Natural killer cell (primary cell): ENCODE measurements at regions of chr5 and their contacts with region 1.

Region 1: GRCh38 chr5:175700991-175701390 is 43.1 kb downstream of the HRH2 start:
- DNase-seq: peak in 1 of 2 donors; percentile 41
- ATAC-seq: peak in 1 of 3 donors; percentile 7
- H3K4me3 ChIP-seq: no peak overlapping the region
- H3K4me3 Mint-ChIP-seq: no peak overlapping the region
- H3K27ac ChIP-seq: no peak overlapping the region
- H3K27ac Mint-ChIP-seq: no peak overlapping the region
- H3K4me1 ChIP-seq: peaks cover 10% of the 10 kb centered on the region
- H3K4me1 Mint-ChIP-seq: peaks cover 0 to 7% of the 10 kb centered on the region in 2 donors
- H3K27me3 ChIP-seq: no peaks in the 10 kb centered on the region
- H3K27me3 Mint-ChIP-seq: peaks cover 8 to 30% of the 10 kb centered on the region in 2 donors
- CTCF ChIP-seq: no peak

Region 2: GRCh38 chr5:174951146-174951780 is 749.7 kb before region 1 on chr5:
- intact Hi-C with region 1: loop called (anchors 5 kb)
- DNase-seq: peak in 1 of 2 donors; percentile 77
- ATAC-seq: peak in 2 of 3 donors; percentile 55 to 71
- H3K4me3 ChIP-seq: no peak overlapping the region
- H3K4me3 Mint-ChIP-seq: no peak overlapping the region
- H3K27ac ChIP-seq: no peak overlapping the region
- H3K27ac Mint-ChIP-seq: no peak overlapping the region
- H3K4me1 ChIP-seq: no peaks in the 10 kb centered on the region
- H3K4me1 Mint-ChIP-seq: no peaks in the 10 kb centered on the region
- H3K27me3 ChIP-seq: no peaks in the 10 kb centered on the region
- H3K27me3 Mint-ChIP-seq: no peaks in the 10 kb centered on the region
- CTCF ChIP-seq: peak; percentile 51

Region 3: GRCh38 chr5:175534070-175534932 is 166.7 kb before region 1 on chr5:
- intact Hi-C with region 1: loop called (anchors 1 kb)
- DNase-seq: peak; percentile 65 to 92
- ATAC-seq: peak; percentile 95 to 100 (median 99)
- H3K4me3 ChIP-seq: no peak overlapping the region
- H3K4me3 Mint-ChIP-seq: peak overlapping the region; percentile 35
- H3K27ac ChIP-seq: no peak overlapping the region
- H3K27ac Mint-ChIP-seq: peak overlapping the region in 1 of 2 donors; percentile 36
- H3K4me1 ChIP-seq: peaks cover 5% of the 10 kb centered on the region
- H3K4me1 Mint-ChIP-seq: peaks cover 0 to 12% of the 10 kb centered on the region in 2 donors
- H3K27me3 ChIP-seq: no peaks in the 10 kb centered on the region
- H3K27me3 Mint-ChIP-seq: peaks cover 0 to 2% of the 10 kb centered on the region in 2 donors
- CTCF ChIP-seq: peak; percentile 99

Region 4: GRCh38 chr5:175718401-175719108 is 17.6 kb after region 1 on chr5:
- intact Hi-C with region 1: no loop called
- DNase-seq: peak in 1 of 2 donors; percentile 69
- ATAC-seq: no peak
- H3K4me3 ChIP-seq: no peak overlapping the region
- H3K4me3 Mint-ChIP-seq: no peak overlapping the region
- H3K27ac ChIP-seq: no peak overlapping the region
- H3K27ac Mint-ChIP-seq: no peak overlapping the region
- H3K4me1 ChIP-seq: no peaks in the 10 kb centered on the region
- H3K4me1 Mint-ChIP-seq: no peaks in the 10 kb centered on the region
- H3K27me3 ChIP-seq: no peaks in the 10 kb centered on the region
- H3K27me3 Mint-ChIP-seq: peaks cover 5 to 8% of the 10 kb centered on the region in 2 donors
- CTCF ChIP-seq: peak; percentile 25

Region 5: GRCh38 chr5:175746851-175747250 is 45.9 kb after region 1 on chr5:
- intact Hi-C with region 1: no loop called
- DNase-seq: no peak
- ATAC-seq: no peak
- H3K4me3 ChIP-seq: no peak overlapping the region
- H3K4me3 Mint-ChIP-seq: no peak overlapping the region
- H3K27ac ChIP-seq: no peak overlapping the region
- H3K27ac Mint-ChIP-seq: no peak overlapping the region
- H3K4me1 ChIP-seq: no peaks in the 10 kb centered on the region
- H3K4me1 Mint-ChIP-seq: peaks cover 0 to 4% of the 10 kb centered on the region in 2 donors
- H3K27me3 ChIP-seq: no peaks in the 10 kb centered on the region
- H3K27me3 Mint-ChIP-seq: peaks cover 20 to 67% of the 10 kb centered on the region in 2 donors
- CTCF ChIP-seq: no peak